ENCODE measurements at regions of chr1 and their contacts with region 1.

Region 1: GRCh38 chr1:165928075-165928731 is 100.8 kb downstream of the UCK2 start:
- DNase-seq: peak in 1 of 3 donors; percentile 54
- ATAC-seq: peak; percentile 71
- H3K4me3 ChIP-seq: no peak overlapping the region
- H3K4me1 ChIP-seq: no peaks in the 10 kb centered on the region
- CTCF ChIP-seq: no peak

Region 2: DNA sequence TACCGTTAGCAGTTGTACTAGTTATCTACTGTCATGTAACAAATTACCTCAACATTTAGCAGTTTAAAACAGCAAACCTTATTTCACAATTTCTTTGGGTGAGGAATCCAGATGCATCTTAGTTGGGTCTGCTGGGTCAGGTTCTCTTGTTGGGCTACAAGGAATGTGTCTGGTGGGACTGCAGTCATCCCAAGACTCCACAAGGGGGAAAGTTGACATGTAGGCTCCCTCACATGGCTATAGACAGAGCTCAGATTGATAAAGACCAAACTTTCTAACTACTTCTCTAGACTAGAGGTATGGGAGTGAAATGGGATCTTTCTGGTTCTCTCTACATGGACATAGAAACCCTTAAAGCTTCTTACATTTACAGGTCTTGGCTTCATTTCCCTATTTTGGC is 60.1 kb after region 1 on chr1:
- intact Hi-C with region 1: no loop called
- DNase-seq: no peak
- ATAC-seq: no peak
- H3K4me3 ChIP-seq: no peak overlapping the region
- H3K4me1 ChIP-seq: no peaks in the 10 kb centered on the region
- CTCF ChIP-seq: no peak

Region 3: DNA sequence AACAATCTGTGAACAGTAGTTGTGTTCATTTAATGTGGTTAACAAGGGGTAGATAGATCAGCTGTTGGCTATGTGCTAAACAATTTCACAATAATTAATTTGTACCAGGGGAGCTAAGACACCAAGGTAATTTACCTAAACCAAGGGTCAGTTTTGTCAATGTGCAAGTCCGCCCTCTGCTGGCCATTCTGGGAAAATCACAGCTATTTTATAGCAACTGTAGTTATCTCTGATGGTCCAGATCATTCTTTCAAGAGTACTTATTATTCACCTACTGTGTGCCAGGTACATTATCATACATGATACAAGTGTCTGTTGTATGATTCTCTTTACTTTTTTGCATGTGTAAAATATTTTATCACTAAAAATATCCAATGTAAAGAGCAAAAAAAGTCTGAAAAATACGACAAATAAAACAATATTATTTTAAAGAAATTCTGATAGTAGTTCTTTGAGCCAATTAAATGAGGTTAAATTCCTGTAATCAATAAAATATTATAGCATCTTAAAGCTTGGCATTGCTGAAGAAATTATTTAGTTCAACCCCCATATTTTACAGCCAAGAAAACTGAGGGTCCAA is 550.9 kb after region 1 on chr1:
- intact Hi-C with region 1: loop called (anchors 5 kb)
- DNase-seq: peak in 2 of 3 donors; percentile 35 to 77
- ATAC-seq: peak; percentile 39
- H3K4me3 ChIP-seq: no peak overlapping the region
- H3K4me1 ChIP-seq: no peaks in the 10 kb centered on the region
- CTCF ChIP-seq: peak; percentile 48

Measured in mucosa of descending colon (tissue), 3 donors.